SK-N-SH (cell line): ENCODE measurements at regions of chr6 and their contacts with region 1.

Region 1: DNA sequence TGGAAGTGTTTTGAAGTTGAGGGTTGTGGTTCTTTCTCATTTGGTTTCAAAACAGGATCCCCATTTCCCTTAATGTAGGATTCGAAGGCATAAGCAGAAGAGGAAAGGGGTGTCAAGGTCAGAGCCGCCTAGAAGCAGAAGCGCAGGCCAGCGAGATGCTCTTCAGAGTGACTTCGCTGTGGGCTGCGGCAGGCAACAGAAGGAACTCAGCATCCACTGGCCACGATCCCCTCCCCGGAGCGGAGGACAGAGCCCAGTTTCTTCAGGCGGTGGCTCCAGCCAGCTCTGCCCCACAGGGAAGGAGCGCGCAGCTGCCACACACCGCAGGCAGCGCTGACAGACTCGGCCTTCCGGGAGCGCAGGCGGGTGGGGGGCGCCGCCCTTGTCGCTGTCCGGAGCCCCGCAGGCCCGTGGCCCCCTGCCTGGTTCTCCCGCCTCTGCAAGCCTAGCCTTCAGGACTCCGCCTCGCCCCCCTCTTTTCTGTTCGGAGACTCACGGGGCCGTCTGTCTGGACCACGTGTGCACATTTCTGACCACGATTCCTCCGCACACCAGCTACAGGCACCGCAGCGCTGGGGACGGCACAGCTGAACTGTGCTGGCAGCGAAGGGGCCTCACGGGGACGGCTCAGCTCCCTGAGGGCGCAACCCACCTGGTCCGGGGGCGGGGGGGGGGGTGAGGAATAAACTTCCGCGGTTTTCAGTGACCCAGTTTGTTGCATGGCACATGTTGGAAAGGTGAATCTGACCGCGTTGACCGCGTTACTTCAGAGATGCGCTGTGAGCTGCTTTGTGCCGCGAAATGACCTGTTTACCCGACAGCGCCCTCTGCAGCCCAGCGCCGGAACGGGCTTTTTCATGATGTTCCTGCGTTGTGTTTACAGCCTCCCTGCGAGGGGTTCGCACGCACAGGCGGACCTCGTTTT is 26.1 kb downstream of the TTLL2 start:
- DNase-seq: peak; percentile 80
- H3K4me3 ChIP-seq: peak overlapping the region; percentile 45 to 49
- H3K27ac ChIP-seq: no peak overlapping the region
- H3K4me1 ChIP-seq: peaks cover 0 to 6% of the 10 kb centered on the region in 2 experiments; a peak in 1 of 4 replicates
- H3K27me3 ChIP-seq: no peaks in the 10 kb centered on the region
- CTCF ChIP-seq: peak; percentile 69
- EP300 ChIP-seq: no peak
- RAD21 ChIP-seq: peak; percentile 60

Region 2: GRCh38 chr6:167219967-167220512 is 131.0 kb before region 1 on chr6:
- CTCF ChIA-PET with region 1: interaction called, 26 read pairs
- POLR2A ChIA-PET with region 1: no interaction called
- DNase-seq: no peak
- H3K4me3 ChIP-seq: no peak overlapping the region
- H3K27ac ChIP-seq: no peak overlapping the region
- H3K4me1 ChIP-seq: no peaks in the 10 kb centered on the region; a peak in 1 of 4 replicates
- H3K27me3 ChIP-seq: no peaks in the 10 kb centered on the region
- CTCF ChIP-seq: no peak
- EP300 ChIP-seq: no peak
- RAD21 ChIP-seq: no peak

Region 3: GRCh38 chr6:167291623-167292300 is 59.2 kb before region 1 on chr6:
- CTCF ChIA-PET with region 1: interaction called, 11 read pairs
- POLR2A ChIA-PET with region 1: no interaction called
- DNase-seq: no peak
- H3K4me3 ChIP-seq: no peak overlapping the region
- H3K27ac ChIP-seq: no peak overlapping the region
- H3K4me1 ChIP-seq: no peaks in the 10 kb centered on the region; a peak in 1 of 4 replicates
- H3K27me3 ChIP-seq: no peaks in the 10 kb centered on the region
- CTCF ChIP-seq: no peak
- EP300 ChIP-seq: no peak
- RAD21 ChIP-seq: no peak